ENCODE measurements at regions of chr1 and their contacts with region 1.

Region 1: GRCh38 chr1:1059494-1060280 is 14.4 kb downstream of the RNF223 start:
- DNase-seq: peak; percentile 91
- ATAC-seq: peak; percentile 65
- H3K4me3 Mint-ChIP-seq: peak overlapping the region; percentile 57
- H3K27ac Mint-ChIP-seq: no peak overlapping the region
- H3K4me1 Mint-ChIP-seq: peaks cover 8% of the 10 kb centered on the region; the same call in 1 of the 2 replicates
- H3K27me3 Mint-ChIP-seq: peaks cover 53% of the 10 kb centered on the region
- CTCF ChIP-seq: no peak; the same call in 1 of the 2 replicates

Region 2: DNA sequence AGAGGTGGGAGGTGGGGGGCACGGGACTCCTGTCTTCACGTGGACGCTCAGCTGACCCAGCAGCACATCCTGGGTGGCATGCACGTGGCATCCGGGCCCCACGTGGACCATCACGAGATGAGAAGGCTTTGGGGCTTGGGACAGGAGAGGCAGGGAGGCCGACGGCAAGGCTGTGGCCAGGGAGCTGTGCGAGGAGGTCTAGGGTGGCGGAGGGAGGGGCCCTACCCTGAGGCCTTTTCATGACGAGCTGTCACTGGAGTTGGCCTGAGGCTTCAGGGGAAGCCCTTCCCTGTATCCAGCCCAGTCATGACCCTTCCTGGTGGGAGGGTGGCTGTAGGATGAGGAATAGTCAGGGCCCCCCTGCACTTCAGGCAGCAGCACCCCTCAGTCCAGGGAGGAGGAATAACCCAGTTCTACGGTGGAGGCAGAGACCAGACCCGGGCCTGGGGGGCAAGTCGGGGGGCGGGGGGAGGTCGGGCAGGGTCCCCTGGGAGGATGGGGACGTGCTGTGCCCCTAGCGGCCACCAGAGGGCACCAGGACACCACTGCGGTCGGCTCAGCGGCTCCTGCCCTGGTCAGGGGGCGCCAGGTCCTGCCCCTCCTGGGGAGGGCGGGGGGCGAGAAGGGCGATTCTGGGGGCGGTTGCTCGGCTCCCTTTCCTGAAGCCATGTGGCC is 75.8 kb before region 1 on chr1:
- CTCF ChIA-PET with region 1: interaction called, 77 read pairs
- POLR2A ChIA-PET with region 1: interaction called, 5 read pairs
- DNase-seq: peak; percentile 85
- ATAC-seq: peak; percentile 92
- H3K4me3 Mint-ChIP-seq: no peak overlapping the region
- H3K27ac Mint-ChIP-seq: no peak overlapping the region
- H3K4me1 Mint-ChIP-seq: no peaks in the 10 kb centered on the region
- H3K27me3 Mint-ChIP-seq: peaks cover 59% of the 10 kb centered on the region
- CTCF ChIP-seq: peak; percentile 98

Region 3: DNA sequence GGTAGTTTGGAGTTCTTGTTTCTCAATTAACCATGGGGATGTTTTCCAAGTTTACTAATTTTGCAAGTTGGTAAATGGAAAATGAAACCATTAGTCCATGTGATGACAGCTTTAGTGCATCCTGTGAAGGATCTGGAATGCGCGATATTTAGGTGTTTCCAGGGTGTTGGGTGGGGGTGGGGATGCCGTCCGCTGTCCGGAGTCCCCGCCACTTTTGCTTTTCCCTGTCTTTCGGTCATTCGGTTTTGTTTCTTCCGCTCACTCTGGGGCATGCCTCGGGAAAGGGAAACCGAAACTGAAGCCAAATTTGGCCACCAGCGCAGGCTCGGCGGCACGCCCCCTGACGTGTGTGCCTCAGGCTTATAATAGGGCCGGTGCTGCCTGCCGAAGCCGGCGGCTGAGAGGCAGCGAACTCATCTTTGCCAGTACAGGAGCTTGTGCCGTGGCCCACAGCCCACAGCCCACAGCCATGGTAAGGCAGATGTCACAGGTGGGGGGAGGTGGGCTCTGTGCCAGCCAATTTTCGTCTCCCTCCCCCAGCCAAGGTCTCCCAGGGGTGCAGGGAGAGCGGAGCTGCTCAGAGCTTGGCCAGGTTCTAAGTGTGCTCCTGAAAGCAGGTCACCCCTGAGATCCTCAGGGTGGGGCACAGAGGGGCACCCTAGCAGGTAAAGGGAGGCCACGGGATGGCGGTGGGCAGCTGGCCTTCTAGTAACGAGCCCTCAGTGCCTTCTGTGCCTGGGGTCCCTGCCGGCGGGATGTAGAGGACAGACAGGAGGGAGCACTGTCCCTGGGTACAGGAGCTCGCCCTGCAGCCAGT is 46.4 kb before region 1 on chr1 and contains the start of gene ISG15:
- CTCF ChIA-PET with region 1: interaction called, 33 read pairs
- POLR2A ChIA-PET with region 1: no interaction called
- DNase-seq: peak; percentile 88
- ATAC-seq: peak; percentile 78
- H3K4me3 Mint-ChIP-seq: peak within 1 kb of the TSS; percentile 78
- H3K27ac Mint-ChIP-seq: peak within 1 kb of the TSS; percentile 95
- H3K4me1 Mint-ChIP-seq: peaks cover 29% of the 10 kb centered on the region
- H3K27me3 Mint-ChIP-seq: peaks cover 48% of the 10 kb centered on the region
- CTCF ChIP-seq: no peak
- total RNA-seq, gene ISG15: 29.5 to 38.3 TPM (median 36.1 TPM) in 3 replicates

Region 4: DNA sequence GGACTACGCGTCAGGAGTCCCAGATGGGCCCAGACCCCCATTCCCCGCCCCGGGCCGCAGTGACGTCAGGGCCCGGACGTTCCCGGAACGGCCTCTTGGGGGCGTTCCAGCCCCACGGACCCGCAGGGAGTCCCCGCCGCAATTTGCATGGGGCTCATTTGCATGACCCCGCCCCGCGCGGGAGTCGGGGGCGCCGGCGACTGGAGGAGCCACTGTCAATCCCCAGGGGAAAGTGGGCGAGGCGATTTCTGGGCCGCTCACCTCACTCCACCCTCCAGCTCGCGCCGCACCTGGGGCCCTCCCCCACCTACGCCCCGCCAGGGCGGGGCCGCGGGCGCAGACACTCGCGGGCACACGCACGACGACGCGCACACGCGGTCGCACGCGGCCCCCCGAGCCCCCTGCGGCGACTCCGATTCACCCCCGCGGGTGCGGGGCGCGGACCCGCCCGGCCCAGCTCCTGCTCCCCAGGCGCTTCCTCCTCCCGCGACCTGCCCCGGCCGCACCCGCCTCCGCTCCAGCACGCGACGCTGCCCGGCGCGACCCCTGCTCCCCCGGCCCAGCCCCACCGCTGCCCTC is 26.6 kb before region 1 on chr1:
- CTCF ChIA-PET with region 1: interaction called, 57 read pairs
- POLR2A ChIA-PET with region 1: no interaction called
- DNase-seq: peak; percentile 98
- ATAC-seq: peak; percentile 90
- H3K4me3 Mint-ChIP-seq: 0 out of 2 replicates have a peak overlapping the region, but pooled peaks have one; percentile 22
- H3K27ac Mint-ChIP-seq: no peak overlapping the region
- H3K4me1 Mint-ChIP-seq: peaks cover 10% of the 10 kb centered on the region
- H3K27me3 Mint-ChIP-seq: peaks cover 31% of the 10 kb centered on the region
- CTCF ChIP-seq: peak; percentile 76

Region 5: GRCh38 chr1:1073670-1074587 is 14.2 kb after region 1 on chr1 and contains the start of gene RNF223:
- CTCF ChIA-PET with region 1: interaction called, 14 read pairs
- POLR2A ChIA-PET with region 1: no interaction called
- DNase-seq: no peak
- ATAC-seq: peak; percentile 13; the same call in 1 of the 2 replicates
- H3K4me3 Mint-ChIP-seq: no peak within 1 kb of the TSS
- H3K27ac Mint-ChIP-seq: peak within 1 kb of the TSS; percentile 68; the same call in 1 of the 2 replicates
- H3K4me1 Mint-ChIP-seq: no peaks in the 10 kb centered on the region
- H3K27me3 Mint-ChIP-seq: peaks cover 12% of the 10 kb centered on the region
- CTCF ChIP-seq: no peak
- total RNA-seq, gene RNF223: not detected in 3 replicates

Region 6: DNA sequence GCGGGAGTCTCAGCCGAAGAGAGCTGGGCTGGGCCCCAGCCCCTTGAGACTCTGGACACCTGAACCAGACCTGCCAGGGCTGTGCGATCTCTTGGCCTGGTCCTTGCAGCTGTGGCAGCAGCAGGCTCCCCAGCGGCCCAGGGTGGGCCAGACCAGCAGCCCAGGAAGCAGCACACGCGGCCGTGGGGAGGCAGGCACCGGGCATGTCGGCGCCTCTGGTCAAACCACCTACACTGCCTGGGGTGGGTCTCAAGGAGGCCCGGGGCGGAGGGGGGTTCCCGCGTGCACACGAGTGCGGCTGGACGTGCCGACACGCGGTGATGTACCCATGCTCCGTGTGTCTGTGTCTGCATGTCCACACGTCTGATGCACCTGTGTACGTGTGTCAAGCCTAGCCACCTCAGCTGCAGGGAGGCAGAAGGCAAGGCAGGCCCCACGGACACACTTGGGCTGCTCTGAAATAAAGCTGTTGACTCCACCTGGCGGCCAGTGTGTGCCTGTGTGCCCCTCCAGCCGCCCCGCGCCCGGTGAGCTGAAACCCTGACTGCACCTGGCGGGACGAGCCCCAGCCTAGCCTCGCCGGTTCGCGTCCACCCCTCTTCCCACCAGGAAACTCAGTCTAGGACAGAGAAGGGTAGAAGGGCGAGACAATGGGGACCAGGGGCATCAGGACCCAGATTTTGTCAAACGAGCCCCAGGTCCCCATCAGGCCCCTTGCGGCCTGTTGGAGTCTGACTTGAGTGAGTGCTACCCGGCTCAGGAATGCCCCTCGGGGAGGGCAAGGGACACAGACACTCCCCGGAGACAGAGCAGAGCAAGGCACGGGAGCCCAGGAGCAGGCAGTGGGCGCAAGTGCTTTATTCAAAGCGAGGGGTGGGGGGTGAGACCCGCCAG is 232.1 kb after region 1 on chr1:
- CTCF ChIA-PET with region 1: interaction called, 15 read pairs
- POLR2A ChIA-PET with region 1: no interaction called
- DNase-seq: peak; percentile 85
- ATAC-seq: peak; percentile 68
- H3K4me3 Mint-ChIP-seq: no peak overlapping the region
- H3K27ac Mint-ChIP-seq: peak overlapping the region; percentile 49; the same call in 1 of the 2 replicates
- H3K4me1 Mint-ChIP-seq: peaks cover 4% of the 10 kb centered on the region; the same call in 1 of the 2 replicates
- H3K27me3 Mint-ChIP-seq: no peaks in the 10 kb centered on the region
- CTCF ChIP-seq: peak; percentile 55